Activated T-helper 1 cell treated with anti-CD3 and anti-CD28 coated beads, Interleukin-12 subunit alpha, Interleukin-12 subunit beta, Interleukin-2, Interleukin-4 antibody, amounts not matched to agents 30 ng/mL and 10 ng/mL and 1 ng/mL, durations not matched to agents 14 hours and 24 hours and 36 hours (primary cell): ENCODE measurements at regions of chr20 and their contacts with region 1.

Region 1: GRCh38 chr20:34955232-34956040 is at the starts of genes GSS and MYH7B:
- DNase-seq: peak; percentile 97
- H3K4me3 Mint-ChIP-seq: peak within 1 kb of the TSS; percentile 94
- H3K27ac Mint-ChIP-seq: peak within 1 kb of the TSS; percentile 95
- H3K4me1 Mint-ChIP-seq: peaks cover 24% of the 10 kb centered on the region
- H3K27me3 Mint-ChIP-seq: peaks cover 3% of the 10 kb centered on the region
- total RNA-seq, gene GSS: 64.1 and 68.0 TPM in 2 replicates
- total RNA-seq, gene MYH7B: 0.20 and 0.44 TPM in 2 replicates

Region 2: GRCh38 chr20:34825530-34826362 is 129.7 kb before region 1 on chr20 and contains the start of gene NCOA6:
- intact Hi-C with region 1: loop called (anchors 1 kb)
- DNase-seq: peak; percentile 68
- H3K4me3 Mint-ChIP-seq: peak within 1 kb of the TSS; percentile 97
- H3K27ac Mint-ChIP-seq: peak within 1 kb of the TSS; percentile 91
- H3K4me1 Mint-ChIP-seq: peaks cover 30% of the 10 kb centered on the region
- H3K27me3 Mint-ChIP-seq: peaks cover 13% of the 10 kb centered on the region
- total RNA-seq, gene NCOA6: 25.5 and 29.1 TPM in 2 replicates

Region 3: DNA sequence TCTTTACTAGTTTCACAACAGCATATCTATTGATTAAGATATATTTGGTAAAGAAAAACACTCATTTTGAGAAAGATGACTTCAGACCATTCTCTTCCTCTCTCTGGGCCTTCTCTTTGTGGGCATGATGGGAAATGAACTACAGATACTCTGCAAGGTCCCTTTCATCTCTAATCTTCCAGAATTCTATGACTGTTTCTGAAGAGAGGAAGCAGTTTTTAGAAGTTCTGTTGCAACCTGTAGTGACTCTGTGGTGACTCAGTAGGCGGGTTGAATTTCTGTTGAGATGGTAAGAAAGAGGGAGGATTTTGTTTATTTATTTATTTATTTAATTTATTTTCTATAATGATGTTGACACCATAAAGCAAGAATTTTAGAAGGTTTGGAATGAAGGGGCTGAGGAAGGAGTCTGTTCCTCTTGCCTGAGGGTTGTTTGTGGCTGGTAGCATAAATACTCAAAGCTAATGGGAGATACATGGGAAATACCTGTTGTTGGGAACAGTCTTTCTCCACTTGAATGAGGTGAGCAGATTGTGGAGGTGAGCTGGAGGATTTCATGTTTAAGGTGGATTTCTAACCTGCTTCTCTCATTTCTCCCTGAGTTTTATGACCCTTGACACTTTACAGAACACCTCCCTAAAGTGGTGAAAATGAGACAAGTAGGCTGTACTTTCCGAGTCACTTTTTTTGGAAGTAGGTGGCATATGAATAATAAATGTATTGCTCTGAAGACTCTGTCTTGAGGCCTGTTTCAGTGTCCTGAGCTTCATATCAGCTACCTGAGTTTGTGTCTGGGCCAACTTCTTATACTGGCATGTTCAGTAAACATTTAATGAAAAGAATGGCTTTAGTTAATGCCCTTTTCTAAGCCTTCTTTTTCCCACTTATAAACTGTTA is 64.0 kb before region 1 on chr20:
- intact Hi-C with region 1: loop called (anchors 1 kb)
- DNase-seq: no peak
- H3K4me3 Mint-ChIP-seq: peak overlapping the region; percentile 43
- H3K27ac Mint-ChIP-seq: peak overlapping the region; percentile 76
- H3K4me1 Mint-ChIP-seq: peaks cover 59% of the 10 kb centered on the region
- H3K27me3 Mint-ChIP-seq: no peaks in the 10 kb centered on the region

Region 4: GRCh38 chr20:34922654-34923424 is 32.6 kb before region 1 on chr20:
- intact Hi-C with region 1: loop called (anchors 1 kb)
- DNase-seq: no peak
- H3K4me3 Mint-ChIP-seq: no peak overlapping the region
- H3K27ac Mint-ChIP-seq: no peak overlapping the region
- H3K4me1 Mint-ChIP-seq: peaks cover 39% of the 10 kb centered on the region
- H3K27me3 Mint-ChIP-seq: no peaks in the 10 kb centered on the region

Region 5: GRCh38 chr20:35277531-35278395 is 322.3 kb after region 1 on chr20 and contains the start of gene MMP24OS:
- intact Hi-C with region 1: loop called (anchors 10 kb)
- DNase-seq: peak; percentile 88
- H3K4me3 Mint-ChIP-seq: peak within 1 kb of the TSS; percentile 98
- H3K27ac Mint-ChIP-seq: peak within 1 kb of the TSS; percentile 99
- H3K4me1 Mint-ChIP-seq: peaks cover 18% of the 10 kb centered on the region
- H3K27me3 Mint-ChIP-seq: no peaks in the 10 kb centered on the region
- total RNA-seq, gene MMP24OS: 25.0 and 27.0 TPM in 2 replicates